Ascending aorta (tissue), 2 donors: ENCODE measurements at regions of chr14 and their contacts with region 1.

Region 1: DNA sequence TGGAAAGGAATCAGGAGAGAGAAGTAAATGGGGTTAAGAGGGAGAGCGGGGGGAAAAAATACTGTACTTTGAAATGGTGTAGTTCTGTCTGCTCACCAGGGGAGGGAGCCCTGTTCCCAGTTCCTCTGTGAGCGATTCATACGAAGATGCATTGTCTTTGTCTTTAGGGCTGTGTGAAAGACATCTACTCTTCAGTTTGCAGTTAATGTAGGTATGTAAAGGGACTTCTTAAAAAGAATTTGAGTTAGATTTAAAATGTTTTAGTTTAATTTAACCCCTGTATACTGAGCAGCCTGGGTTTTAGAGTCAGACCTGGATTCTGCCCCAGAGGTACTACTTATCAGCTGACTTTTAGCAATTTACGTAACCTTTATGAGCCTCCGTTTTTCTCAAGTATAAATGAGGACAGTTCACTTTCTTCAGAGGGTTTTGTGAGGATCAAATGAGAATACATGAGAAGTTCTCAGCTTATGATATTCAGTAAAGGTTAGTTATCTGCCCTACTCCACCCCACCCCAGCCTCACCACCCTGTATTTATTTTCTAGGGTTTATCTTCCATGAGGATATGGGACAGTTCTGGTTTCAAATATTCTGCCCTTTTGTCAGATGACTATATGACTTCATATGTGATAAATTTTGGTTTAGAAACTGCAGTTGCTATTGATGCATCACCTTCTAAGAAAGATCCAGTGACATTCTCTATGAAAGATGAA is 82.5 kb upstream of the EVL start:
- DNase-seq: peak in 1 of 2 donors; percentile 69
- H3K4me3 ChIP-seq: no peak overlapping the region
- H3K27ac ChIP-seq: no peak overlapping the region
- H3K4me1 ChIP-seq: no peaks in the 10 kb centered on the region
- H3K27me3 ChIP-seq: no peaks in the 10 kb centered on the region
- CTCF ChIP-seq: peak; percentile 71 to 86 (median 85)

Region 2: GRCh38 chr14:100031536-100032281 is 49.0 kb after region 1 on chr14:
- intact Hi-C with region 1: loop called (anchors 5 kb)
- DNase-seq: peak; percentile 14 to 85
- H3K4me3 ChIP-seq: peak overlapping the region in 1 of 2 donors; percentile 34
- H3K27ac ChIP-seq: peak overlapping the region; percentile 42 to 48
- H3K4me1 ChIP-seq: peaks cover 0 to 17% of the 10 kb centered on the region in 2 donors
- H3K27me3 ChIP-seq: no peaks in the 10 kb centered on the region
- CTCF ChIP-seq: no peak